HepG2 (cell line): ENCODE measurements at regions of chr9 and their contacts with region 1.

Region 1: DNA sequence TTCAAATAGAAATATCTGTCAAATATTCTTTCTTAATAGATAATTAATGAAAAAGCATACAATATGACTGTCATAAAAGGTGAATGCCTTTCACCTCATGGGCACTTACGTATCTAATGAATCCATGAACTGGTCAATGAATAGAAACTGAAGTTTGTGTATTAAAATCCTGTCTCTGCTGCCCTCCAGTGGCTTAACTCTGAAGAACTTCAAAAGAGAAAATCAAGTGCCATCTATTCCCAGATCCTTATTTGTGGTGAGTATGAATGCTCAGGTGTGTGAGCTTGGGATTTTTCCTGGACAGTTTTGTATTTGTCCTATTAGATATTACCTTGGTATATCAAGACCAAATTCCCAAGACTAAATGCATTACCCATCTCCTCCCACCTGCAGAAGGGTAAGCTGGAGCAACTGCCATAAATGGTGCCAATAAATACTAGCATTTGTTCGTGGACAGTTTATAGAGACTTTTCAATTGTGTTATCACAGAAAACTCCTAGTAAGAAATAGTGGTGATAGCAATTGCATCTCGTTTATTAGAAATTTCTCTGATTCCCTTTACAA is 44.0 kb upstream of the SVEP1 start:
- DNase-seq: peak; percentile 55
- ATAC-seq: peak; percentile 58
- H3K4me3 ChIP-seq: no peak overlapping the region
- H3K27ac ChIP-seq: no peak overlapping the region
- H3K4me1 ChIP-seq: no peaks in the 10 kb centered on the region
- H3K27me3 ChIP-seq: no peaks in the 10 kb centered on the region
- CTCF ChIP-seq: peak; percentile 73
- EP300 ChIP-seq: no peak
- POLR2A ChIP-seq: no peak
- RAD21 ChIP-seq: peak; percentile 50; the same call in 1 of the 2 replicates

Region 2: DNA sequence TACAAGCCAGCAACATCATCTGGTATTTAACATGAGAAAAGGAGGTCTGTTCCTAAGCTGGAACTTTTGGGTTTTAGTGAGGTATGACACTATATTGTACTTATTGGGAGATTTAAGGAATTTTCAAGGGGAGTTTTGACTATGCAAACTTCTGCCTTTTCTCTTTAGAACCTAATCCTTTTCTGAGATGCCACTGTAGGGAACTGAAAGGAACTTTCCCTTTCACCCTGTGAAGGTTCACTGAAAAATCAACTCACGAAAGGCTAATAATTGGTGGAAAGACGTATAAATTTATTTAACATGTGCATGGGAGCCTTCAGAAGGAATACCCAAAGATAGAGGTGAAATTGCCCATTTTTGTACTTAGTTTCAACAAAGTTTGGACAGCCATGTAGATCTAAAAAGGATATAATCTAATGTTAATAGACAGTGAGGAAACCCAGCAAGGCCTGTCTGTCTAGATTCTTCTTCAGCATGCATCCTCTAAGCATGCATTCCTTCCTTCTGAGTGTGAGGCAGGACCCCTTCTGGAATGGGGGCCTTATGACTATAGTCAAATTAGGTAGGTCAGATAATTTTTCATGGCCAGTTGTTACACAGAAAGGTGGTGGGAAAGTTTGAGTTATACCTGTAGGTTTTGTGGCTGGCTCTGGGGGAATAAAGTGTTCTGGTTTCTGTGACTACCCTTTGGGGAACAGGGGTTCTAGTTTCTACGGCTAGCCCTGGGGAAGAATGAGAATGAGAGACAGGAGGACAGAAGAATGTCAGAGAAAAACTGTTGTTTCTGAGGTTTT is 615.9 kb before region 1 on chr9:
- CTCF ChIA-PET with region 1: no interaction called
- POLR2A ChIA-PET with region 1: no interaction called
- in situ Hi-C with region 1: no loop called
- intact Hi-C with region 1: loop called (anchors 5 kb)
- DNase-seq: no peak
- ATAC-seq: no peak
- H3K4me3 ChIP-seq: no peak overlapping the region
- H3K27ac ChIP-seq: no peak overlapping the region
- H3K4me1 ChIP-seq: no peaks in the 10 kb centered on the region
- H3K27me3 ChIP-seq: no peaks in the 10 kb centered on the region
- CTCF ChIP-seq: no peak
- EP300 ChIP-seq: no peak
- POLR2A ChIP-seq: no peak
- RAD21 ChIP-seq: no peak

Region 3: GRCh38 chr9:110183208-110184145 is 440.1 kb before region 1 on chr9:
- CTCF ChIA-PET with region 1: interaction called, 7 read pairs
- POLR2A ChIA-PET with region 1: no interaction called
- in situ Hi-C with region 1: loop called (anchors 5 kb)
- intact Hi-C with region 1: loop called (anchors 1 kb)
- DNase-seq: peak; percentile 78
- ATAC-seq: peak; percentile 67
- H3K4me3 ChIP-seq: no peak overlapping the region
- H3K27ac ChIP-seq: no peak overlapping the region
- H3K4me1 ChIP-seq: peaks cover 75% of the 10 kb centered on the region
- H3K27me3 ChIP-seq: no peaks in the 10 kb centered on the region
- CTCF ChIP-seq: peak; percentile 91
- EP300 ChIP-seq: no peak
- POLR2A ChIP-seq: no peak
- RAD21 ChIP-seq: peak; percentile 93

Region 4: DNA sequence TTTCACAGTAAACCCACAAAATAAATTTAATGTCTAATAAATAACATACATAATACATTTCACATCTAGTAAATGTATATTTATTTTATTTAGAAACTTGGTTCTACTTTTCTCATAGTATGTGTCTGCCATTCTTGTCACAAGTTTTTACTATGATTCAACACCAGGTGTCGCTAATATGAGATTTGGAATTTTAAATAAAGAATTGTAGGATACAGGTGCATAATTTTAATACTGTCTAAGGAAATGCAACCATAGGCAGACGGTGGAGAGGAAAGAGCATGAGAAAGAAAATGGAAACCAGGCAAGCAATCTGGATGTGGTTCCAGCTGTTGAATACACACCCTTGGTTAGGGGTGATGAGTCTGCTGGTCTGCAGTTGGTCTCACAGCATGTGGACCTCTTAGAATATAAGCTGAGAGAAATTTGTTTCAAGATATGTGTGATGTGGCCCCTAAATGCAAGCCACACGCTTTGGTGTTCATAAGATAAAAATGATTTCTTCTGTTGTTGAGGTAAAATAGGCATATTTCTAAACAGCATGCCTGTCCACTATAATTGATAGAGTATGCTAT is 171.2 kb before region 1 on chr9:
- CTCF ChIA-PET with region 1: interaction called, 16 read pairs
- POLR2A ChIA-PET with region 1: no interaction called
- in situ Hi-C with region 1: loop called (anchors 5 kb)
- intact Hi-C with region 1: loop called (anchors 1 kb)
- DNase-seq: no peak
- ATAC-seq: no peak
- H3K4me3 ChIP-seq: no peak overlapping the region
- H3K27ac ChIP-seq: no peak overlapping the region
- H3K4me1 ChIP-seq: no peaks in the 10 kb centered on the region
- H3K27me3 ChIP-seq: no peaks in the 10 kb centered on the region; a peak in 1 of 5 replicates
- CTCF ChIP-seq: 0 out of 2 replicates have a peak, but pooled peaks have one; percentile 29
- EP300 ChIP-seq: no peak
- POLR2A ChIP-seq: no peak
- RAD21 ChIP-seq: no peak